Activated B cell treated with CpG ODN at 0.5 μM for 24 hours (primary cell): ENCODE measurements at regions of chr21 and their contacts with region 1.

Region 1: GRCh38 chr21:42233067-42233961 is 14.4 kb downstream of the ABCG1 start:
- DNase-seq: peak; percentile 44
- ATAC-seq: peak; percentile 53
- H3K4me3 Mint-ChIP-seq: peak overlapping the region; percentile 69
- H3K27ac Mint-ChIP-seq: peak overlapping the region; percentile 80
- H3K4me1 Mint-ChIP-seq: peaks cover 94% of the 10 kb centered on the region
- H3K27me3 Mint-ChIP-seq: no peaks in the 10 kb centered on the region
- CTCF ChIP-seq: no peak

Region 2: DNA sequence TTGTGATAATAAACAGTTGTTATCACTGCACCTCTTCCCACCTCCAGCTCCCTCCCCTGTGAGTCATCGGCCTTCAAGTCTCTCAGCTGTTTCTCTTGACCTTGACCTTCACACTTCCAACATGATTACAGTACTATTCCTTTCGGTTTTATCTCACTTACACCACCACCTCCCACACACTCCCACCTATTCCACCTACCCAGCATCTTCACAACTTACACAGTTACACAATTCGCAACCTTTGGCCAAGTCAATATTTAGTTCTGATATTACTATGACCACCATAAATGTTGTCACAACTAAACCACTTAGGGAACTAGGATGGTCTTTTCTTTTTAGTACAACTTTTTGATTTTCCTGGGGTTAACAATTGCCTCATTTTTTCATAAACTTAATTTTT is 526.6 kb before region 1 on chr21:
- CTCF ChIA-PET with region 1: no interaction called
- POLR2A ChIA-PET with region 1: no interaction called
- intact Hi-C with region 1: no loop called
- DNase-seq: no peak
- ATAC-seq: no peak
- H3K4me3 Mint-ChIP-seq: no peak overlapping the region
- H3K27ac Mint-ChIP-seq: no peak overlapping the region
- H3K4me1 Mint-ChIP-seq: no peaks in the 10 kb centered on the region
- H3K27me3 Mint-ChIP-seq: peaks cover 28% of the 10 kb centered on the region
- CTCF ChIP-seq: no peak

Region 3: GRCh38 chr21:41783441-41784161 is 449.7 kb before region 1 on chr21:
- CTCF ChIA-PET with region 1: no interaction called
- POLR2A ChIA-PET with region 1: no interaction called
- intact Hi-C with region 1: no loop called
- DNase-seq: no peak
- ATAC-seq: no peak
- H3K4me3 Mint-ChIP-seq: no peak overlapping the region
- H3K27ac Mint-ChIP-seq: no peak overlapping the region
- H3K4me1 Mint-ChIP-seq: peaks cover 2% of the 10 kb centered on the region
- H3K27me3 Mint-ChIP-seq: peaks cover 55% of the 10 kb centered on the region
- CTCF ChIP-seq: no peak

Region 4: GRCh38 chr21:42174173-42174572 is 59.1 kb before region 1 on chr21:
- CTCF ChIA-PET with region 1: no interaction called
- POLR2A ChIA-PET with region 1: no interaction called
- intact Hi-C with region 1: no loop called
- DNase-seq: no peak
- ATAC-seq: no peak
- H3K4me3 Mint-ChIP-seq: peak overlapping the region; percentile 39
- H3K27ac Mint-ChIP-seq: no peak overlapping the region
- H3K4me1 Mint-ChIP-seq: peaks cover 3% of the 10 kb centered on the region
- H3K27me3 Mint-ChIP-seq: no peaks in the 10 kb centered on the region
- CTCF ChIP-seq: no peak

Region 5: DNA sequence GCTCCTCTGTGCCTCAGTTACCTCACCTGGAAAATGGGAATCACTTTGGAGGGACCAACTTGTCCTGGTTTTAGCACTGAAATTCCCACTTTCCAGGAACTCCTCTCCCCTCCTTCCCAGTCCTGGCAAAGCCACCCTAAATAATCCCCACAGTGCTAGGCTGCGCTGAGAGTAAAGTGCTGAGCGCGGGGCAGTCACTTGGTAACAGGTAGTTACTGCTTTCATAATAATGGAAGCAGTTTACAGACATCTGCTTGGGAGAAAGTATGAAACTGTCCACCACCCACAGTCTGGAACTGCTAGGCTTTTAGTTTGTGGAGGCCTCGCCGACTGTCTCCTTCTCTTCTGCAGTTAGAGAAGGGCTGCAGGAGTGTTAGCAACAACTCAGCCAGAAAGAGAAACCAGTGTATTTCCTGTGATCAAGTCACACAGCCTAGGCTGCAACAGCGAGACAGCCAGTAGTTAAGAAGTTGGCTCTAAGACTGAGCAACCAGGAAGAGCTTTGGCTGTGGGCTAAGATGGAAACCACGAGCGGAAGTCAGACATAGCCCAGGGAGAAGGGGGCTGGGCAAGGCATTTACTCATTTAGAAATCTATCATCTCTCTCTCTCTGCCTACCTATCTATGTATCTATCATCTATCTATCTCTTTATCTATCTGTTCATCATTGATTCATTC is 45.2 kb before region 1 on chr21:
- CTCF ChIA-PET with region 1: interaction called, 3 read pairs
- POLR2A ChIA-PET with region 1: interaction called, 7 read pairs
- intact Hi-C with region 1: loop called (anchors 1 kb)
- DNase-seq: peak; percentile 40
- ATAC-seq: peak; percentile 98
- H3K4me3 Mint-ChIP-seq: peak overlapping the region; percentile 72
- H3K27ac Mint-ChIP-seq: peak overlapping the region; percentile 93
- H3K4me1 Mint-ChIP-seq: peaks cover 46% of the 10 kb centered on the region
- H3K27me3 Mint-ChIP-seq: no peaks in the 10 kb centered on the region
- CTCF ChIP-seq: no peak

Region 6: DNA sequence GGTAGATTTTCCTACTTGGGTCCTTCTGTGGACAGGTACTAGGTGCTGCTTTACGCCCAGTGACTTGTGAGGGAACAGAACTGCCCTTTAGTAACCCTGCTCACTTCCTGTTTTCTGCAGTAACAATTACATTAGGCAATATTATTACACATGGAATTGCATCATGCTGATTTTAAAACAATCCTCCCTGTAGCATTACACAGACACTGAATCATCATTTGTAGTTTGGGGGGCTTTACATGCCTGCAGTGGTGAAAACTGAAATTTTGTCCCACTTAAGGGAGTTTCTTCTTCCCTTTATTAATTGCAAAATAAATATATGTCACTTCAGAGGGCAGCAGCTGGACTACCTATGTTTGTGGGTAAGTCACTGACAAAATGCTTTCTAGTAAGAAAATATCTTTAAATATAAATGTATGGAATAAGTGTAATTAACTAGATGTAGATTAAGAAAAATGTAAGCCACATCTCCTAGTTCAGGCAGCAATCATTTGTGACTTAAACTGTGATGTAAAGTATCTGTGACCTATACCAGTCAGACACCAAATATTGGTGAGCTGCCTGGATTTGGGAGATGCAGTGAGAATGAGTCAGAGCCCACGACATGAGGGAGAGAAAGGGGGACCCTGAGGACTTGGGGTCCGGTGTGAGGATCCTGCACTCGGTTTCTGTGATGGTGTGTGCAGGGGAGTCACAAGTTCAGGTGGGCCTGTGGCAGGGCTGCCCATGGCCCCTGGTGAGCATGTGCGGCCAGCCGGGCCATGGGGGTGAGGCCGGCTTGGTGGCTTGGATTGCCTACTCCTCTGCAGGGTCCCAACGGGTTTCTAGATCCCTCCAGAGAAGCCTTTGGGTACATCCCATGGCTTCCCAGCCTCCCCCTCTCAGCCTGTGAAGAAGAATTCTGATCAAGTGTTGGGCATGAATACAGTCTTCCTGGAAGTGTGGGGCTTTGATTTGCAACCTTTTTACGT is 33.5 kb before region 1 on chr21:
- CTCF ChIA-PET with region 1: no interaction called
- POLR2A ChIA-PET with region 1: no interaction called
- intact Hi-C with region 1: loop called (anchors 1 kb)
- DNase-seq: no peak
- ATAC-seq: peak; percentile 84
- H3K4me3 Mint-ChIP-seq: peak overlapping the region; percentile 46
- H3K27ac Mint-ChIP-seq: no peak overlapping the region
- H3K4me1 Mint-ChIP-seq: peaks cover 26% of the 10 kb centered on the region
- H3K27me3 Mint-ChIP-seq: no peaks in the 10 kb centered on the region
- CTCF ChIP-seq: no peak

Region 7: DNA sequence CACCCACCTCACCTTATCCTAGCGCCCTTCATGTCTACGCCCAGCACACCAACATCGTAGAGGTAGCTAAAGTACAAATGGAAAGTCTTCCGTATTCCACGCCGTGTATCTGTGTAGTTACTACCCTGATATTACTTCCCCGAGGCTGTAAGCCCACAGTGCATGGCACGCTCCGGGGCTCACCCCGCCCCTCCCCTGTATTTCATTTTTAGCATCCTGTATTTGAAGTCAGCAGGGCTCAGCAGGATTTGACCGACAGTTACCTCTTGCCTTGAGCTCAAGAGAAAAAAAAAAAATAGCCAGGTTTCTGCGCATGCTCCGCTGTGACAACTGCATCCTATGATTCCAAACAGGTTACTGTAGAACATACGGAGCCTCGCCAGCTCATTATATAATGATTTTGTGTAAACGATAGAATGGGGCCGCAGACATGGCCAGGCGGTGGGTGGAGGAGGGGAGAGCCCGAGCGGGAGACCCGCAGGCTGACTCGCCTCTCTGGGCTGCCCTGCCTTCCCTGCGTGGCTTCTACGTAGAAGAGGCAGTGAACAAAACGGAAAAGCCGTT is 13.1 kb before region 1 on chr21:
- CTCF ChIA-PET with region 1: interaction called, 15 read pairs
- POLR2A ChIA-PET with region 1: interaction called, 37 read pairs
- intact Hi-C with region 1: loop called (anchors 1 kb)
- DNase-seq: peak; percentile 50
- ATAC-seq: peak; percentile 84
- H3K4me3 Mint-ChIP-seq: peak overlapping the region; percentile 87
- H3K27ac Mint-ChIP-seq: peak overlapping the region; percentile 73
- H3K4me1 Mint-ChIP-seq: peaks cover 39% of the 10 kb centered on the region
- H3K27me3 Mint-ChIP-seq: no peaks in the 10 kb centered on the region
- CTCF ChIP-seq: no peak

Region 8: DNA sequence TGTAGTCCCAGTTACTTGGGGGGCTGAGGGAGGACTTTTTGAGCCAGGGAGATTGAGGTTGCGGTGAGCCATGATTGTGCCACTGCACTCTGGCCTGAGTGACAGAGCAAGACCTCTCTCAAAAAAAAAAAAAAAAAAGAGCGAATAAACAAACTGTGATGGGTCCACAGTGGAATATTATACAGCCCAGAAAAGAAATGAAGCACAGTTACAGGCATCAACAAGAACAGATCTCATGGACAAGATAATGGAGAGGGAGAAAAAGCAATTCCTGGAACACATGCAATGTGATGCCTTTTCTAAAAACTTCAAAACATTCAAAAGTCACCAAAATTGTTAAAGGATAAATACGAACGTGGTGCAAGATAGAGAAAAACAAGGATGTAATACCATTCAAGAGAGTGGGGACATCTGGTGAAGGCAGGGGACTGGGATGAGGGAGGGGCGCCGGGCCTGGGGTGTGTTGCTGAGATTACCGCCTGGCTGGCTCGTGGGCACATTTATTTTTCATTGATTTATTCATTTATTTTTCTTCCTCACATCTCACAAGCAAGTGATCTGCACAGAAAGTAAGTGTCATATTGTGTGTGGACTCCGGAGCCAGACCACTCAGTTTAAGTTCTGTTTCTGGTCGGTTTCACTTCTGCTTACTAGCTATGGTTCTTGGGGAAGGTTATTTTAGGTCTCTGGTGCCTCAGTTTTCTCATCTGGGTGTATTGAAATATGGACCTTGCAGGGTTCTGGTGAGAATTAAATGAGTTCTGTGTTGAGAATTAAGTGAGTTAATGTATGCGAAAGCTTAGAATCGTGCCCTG is 15.7 kb after region 1 on chr21:
- CTCF ChIA-PET with region 1: interaction called, 4 read pairs
- POLR2A ChIA-PET with region 1: interaction called, 3 read pairs
- intact Hi-C with region 1: loop called (anchors 1 kb)
- DNase-seq: no peak
- ATAC-seq: peak; percentile 92
- H3K4me3 Mint-ChIP-seq: peak overlapping the region; percentile 3
- H3K27ac Mint-ChIP-seq: peak overlapping the region; percentile 65
- H3K4me1 Mint-ChIP-seq: peaks cover 61% of the 10 kb centered on the region
- H3K27me3 Mint-ChIP-seq: no peaks in the 10 kb centered on the region
- CTCF ChIP-seq: no peak

Region 9: GRCh38 chr21:42258153-42258884 is 25.0 kb after region 1 on chr21:
- CTCF ChIA-PET with region 1: interaction called, 18 read pairs
- POLR2A ChIA-PET with region 1: interaction called, 4 read pairs
- intact Hi-C with region 1: no loop called
- DNase-seq: peak; percentile 73
- ATAC-seq: peak; percentile 97
- H3K4me3 Mint-ChIP-seq: peak overlapping the region; percentile 1
- H3K27ac Mint-ChIP-seq: no peak overlapping the region
- H3K4me1 Mint-ChIP-seq: peaks cover 43% of the 10 kb centered on the region
- H3K27me3 Mint-ChIP-seq: no peaks in the 10 kb centered on the region
- CTCF ChIP-seq: peak; percentile 78

Region 10: DNA sequence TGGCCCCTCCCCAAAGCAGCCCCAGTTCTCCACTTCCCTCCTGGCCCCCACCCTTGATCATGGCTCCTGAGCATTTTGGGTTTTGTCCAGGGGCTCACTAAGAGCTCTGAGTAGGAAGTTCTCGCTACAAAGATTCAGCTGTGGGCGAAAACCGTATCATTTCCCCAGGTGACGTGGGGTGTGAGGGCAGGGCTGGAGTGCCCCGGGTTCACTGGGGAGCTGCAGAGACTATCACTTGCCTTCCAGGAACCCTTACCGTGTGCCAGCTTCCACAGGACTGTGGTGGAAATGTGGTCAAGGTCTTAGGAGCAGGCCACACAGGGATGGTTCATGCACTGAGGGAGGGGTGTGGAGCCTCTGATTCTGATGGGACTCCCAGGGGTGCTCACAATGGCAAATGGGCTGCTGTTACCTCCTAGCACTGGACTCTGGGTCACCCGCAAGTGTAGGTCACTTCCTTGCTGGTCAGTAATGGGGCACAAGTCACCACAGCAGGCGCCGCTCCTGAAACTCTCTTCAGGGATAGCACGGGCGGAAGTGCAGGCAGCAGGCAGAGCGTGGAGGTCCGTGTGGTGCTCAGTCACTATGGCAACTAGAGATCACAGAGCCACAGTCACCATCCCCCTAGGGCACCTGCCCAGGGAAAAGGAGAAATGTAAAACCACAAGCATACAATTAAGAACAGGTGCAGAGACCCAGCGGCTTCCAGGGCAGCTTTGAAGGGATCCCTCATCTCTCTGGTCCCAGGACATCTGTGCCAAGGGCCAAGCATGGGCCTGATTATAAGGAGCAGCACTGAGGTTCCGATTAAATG is 227.3 kb after region 1 on chr21:
- CTCF ChIA-PET with region 1: no interaction called
- POLR2A ChIA-PET with region 1: interaction called, 4 read pairs
- intact Hi-C with region 1: loop called (anchors 2 kb)
- DNase-seq: peak; percentile 62
- ATAC-seq: peak; percentile 60
- H3K4me3 Mint-ChIP-seq: peak overlapping the region; percentile 78
- H3K27ac Mint-ChIP-seq: peak overlapping the region; percentile 98
- H3K4me1 Mint-ChIP-seq: peaks cover 65% of the 10 kb centered on the region
- H3K27me3 Mint-ChIP-seq: no peaks in the 10 kb centered on the region
- CTCF ChIP-seq: no peak